Panc1 (cell line): ENCODE measurements at regions of chr2 and their contacts with region 1.

Region 1: GRCh38 chr2:85538486-85539360 is at the start of gene MAT2A:
- DNase-seq: no peak
- ATAC-seq: peak; percentile 82
- H3K4me3 ChIP-seq: peak within 1 kb of the TSS; percentile 99 to 100
- H3K27ac ChIP-seq: peak within 1 kb of the TSS; percentile 100
- H3K4me1 ChIP-seq: peaks cover 53% of the 10 kb centered on the region
- H3K27me3 ChIP-seq: no peaks in the 10 kb centered on the region
- CTCF ChIP-seq: peak; percentile 88
- total RNA-seq, gene MAT2A: 547 TPM

Region 2: GRCh38 chr2:85199698-85200097 is 339.0 kb before region 1 on chr2:
- CTCF ChIA-PET with region 1: no interaction called
- POLR2A ChIA-PET with region 1: no interaction called
- in situ Hi-C with region 1: no loop called
- intact Hi-C with region 1: no loop called
- DNase-seq: no peak
- ATAC-seq: no peak
- H3K4me3 ChIP-seq: no peak overlapping the region
- H3K27ac ChIP-seq: no peak overlapping the region
- H3K4me1 ChIP-seq: no peaks in the 10 kb centered on the region
- H3K27me3 ChIP-seq: no peaks in the 10 kb centered on the region
- CTCF ChIP-seq: no peak

Region 3: GRCh38 chr2:85511008-85511811 is 27.5 kb before region 1 on chr2:
- CTCF ChIA-PET with region 1: no interaction called
- POLR2A ChIA-PET with region 1: interaction called, 16 read pairs
- in situ Hi-C with region 1: no loop called
- intact Hi-C with region 1: no loop called
- DNase-seq: no peak
- ATAC-seq: peak; percentile 87
- H3K4me3 ChIP-seq: no peak overlapping the region
- H3K27ac ChIP-seq: peak overlapping the region; percentile 94
- H3K4me1 ChIP-seq: peaks cover 64% of the 10 kb centered on the region
- H3K27me3 ChIP-seq: no peaks in the 10 kb centered on the region
- CTCF ChIP-seq: no peak

Region 4: DNA sequence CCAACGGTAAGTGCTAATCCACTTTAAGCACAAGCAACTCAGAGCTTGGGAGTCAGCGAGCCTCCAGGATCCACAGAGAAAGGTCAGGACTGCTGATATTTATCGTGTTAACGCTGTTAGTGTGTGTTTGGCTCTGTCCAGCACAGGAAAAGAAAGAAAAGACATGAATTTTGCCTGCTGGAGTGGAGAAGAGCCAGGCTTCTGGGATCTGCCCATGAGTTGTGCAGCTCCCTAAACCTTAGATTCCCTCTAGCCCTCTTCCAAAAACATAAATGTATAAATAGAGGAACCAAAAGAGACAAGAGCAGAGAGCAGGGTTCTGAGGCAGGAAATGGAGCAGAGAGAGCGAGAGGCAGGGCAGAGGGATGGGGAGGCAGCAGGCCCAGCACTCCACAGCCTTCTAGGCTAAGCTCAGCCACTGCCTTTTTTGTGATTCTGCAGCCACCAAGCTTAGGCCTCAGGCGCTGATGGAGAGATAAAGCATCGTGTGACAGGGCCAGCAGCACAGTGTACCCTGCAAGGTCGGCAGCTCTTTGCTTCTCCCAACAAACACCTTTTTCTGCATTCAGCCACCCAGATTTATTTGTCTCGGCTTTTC is 14.3 kb before region 1 on chr2:
- CTCF ChIA-PET with region 1: no interaction called
- POLR2A ChIA-PET with region 1: interaction called, 18 read pairs
- in situ Hi-C with region 1: no loop called
- intact Hi-C with region 1: no loop called
- DNase-seq: no peak
- ATAC-seq: peak; percentile 76
- H3K4me3 ChIP-seq: peak overlapping the region in 1 of 2 experiments; percentile 14; a peak in 2 of 4 replicates
- H3K27ac ChIP-seq: peak overlapping the region; percentile 89
- H3K4me1 ChIP-seq: peaks cover 57% of the 10 kb centered on the region
- H3K27me3 ChIP-seq: no peaks in the 10 kb centered on the region
- CTCF ChIP-seq: no peak

Region 5: DNA sequence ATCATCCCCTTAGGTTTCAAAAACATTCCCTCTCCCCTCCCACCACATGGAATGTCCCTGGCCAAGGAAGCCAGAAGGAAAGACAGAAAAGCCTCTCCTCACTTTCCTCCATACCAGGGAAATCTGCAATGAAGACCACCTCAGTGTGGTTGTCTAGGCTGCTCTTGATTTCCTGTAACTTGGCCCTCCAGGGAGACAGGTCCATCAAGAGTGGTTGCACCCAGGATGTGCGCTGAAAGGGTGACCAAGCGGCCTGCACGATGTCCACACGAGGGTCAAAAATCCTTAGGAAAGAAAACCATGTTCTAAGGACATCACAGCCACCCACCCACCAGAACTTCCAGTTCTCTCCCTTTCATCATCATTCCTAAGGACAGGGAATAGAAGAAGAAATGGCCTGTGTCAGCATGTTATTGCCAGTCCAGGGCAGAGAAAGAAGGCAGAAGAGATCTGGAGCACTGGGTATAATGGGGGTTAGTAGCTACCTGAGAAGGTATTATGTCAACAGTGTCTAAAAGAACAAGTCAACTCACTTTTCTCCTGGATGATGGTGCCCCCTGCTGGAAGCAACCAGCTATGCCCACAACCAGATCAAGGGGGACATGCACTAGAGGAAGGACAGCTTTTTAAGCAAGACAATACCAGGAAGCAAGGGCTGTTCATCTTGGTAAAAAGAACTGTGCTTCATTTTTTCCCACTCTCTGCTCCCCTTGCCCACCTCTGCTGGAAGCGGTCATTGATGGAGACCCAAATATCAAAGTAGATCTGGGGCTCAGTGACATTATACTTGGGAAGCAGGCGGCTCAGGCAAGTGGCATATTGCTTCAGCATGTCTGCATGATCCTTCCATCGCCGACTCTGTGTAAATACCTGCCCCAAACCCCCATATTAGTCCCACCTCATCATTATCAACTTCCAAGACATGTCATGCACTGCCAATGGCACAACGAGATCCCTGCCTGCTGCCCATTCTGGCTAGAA is 13.3 kb after region 1 on chr2:
- CTCF ChIA-PET with region 1: no interaction called
- POLR2A ChIA-PET with region 1: interaction called, 10 read pairs
- in situ Hi-C with region 1: no loop called
- intact Hi-C with region 1: no loop called
- DNase-seq: no peak
- ATAC-seq: peak; percentile 55
- H3K4me3 ChIP-seq: no peak overlapping the region
- H3K27ac ChIP-seq: peak overlapping the region; percentile 100
- H3K4me1 ChIP-seq: peaks cover 50% of the 10 kb centered on the region
- H3K27me3 ChIP-seq: no peaks in the 10 kb centered on the region
- CTCF ChIP-seq: peak; percentile 90